ENCODE measurements at regions of chr19 and their contacts with region 1.

Region 1: GRCh38 chr19:39970675-39971379 is at the start of gene PSMC4:
- DNase-seq: peak; percentile 99
- H3K4me3 ChIP-seq: peak within 1 kb of the TSS; percentile 86
- H3K27ac ChIP-seq: peak within 1 kb of the TSS; percentile 60
- H3K4me1 ChIP-seq: peaks cover 23% of the 10 kb centered on the region
- CTCF ChIP-seq: peak; percentile 93
- total RNA-seq, gene PSMC4: 82.3 and 94.3 TPM in 2 replicates

Region 2: GRCh38 chr19:39759457-39760184 is 211.2 kb before region 1 on chr19:
- CTCF ChIA-PET with region 1: no interaction called
- POLR2A ChIA-PET with region 1: no interaction called
- intact Hi-C with region 1: no loop called
- DNase-seq: no peak
- H3K4me3 ChIP-seq: no peak overlapping the region
- H3K27ac ChIP-seq: no peak overlapping the region
- H3K4me1 ChIP-seq: peaks cover 13% of the 10 kb centered on the region
- CTCF ChIP-seq: no peak

Region 3: GRCh38 chr19:39792999-39793546 is 177.8 kb before region 1 on chr19:
- CTCF ChIA-PET with region 1: no interaction called
- POLR2A ChIA-PET with region 1: interaction called, 3 read pairs
- intact Hi-C with region 1: loop called (anchors 2 kb)
- DNase-seq: peak; percentile 85
- H3K4me3 ChIP-seq: peak overlapping the region; percentile 66
- H3K27ac ChIP-seq: no peak overlapping the region
- H3K4me1 ChIP-seq: peaks cover 4% of the 10 kb centered on the region
- CTCF ChIP-seq: peak; percentile 98

Region 4: DNA sequence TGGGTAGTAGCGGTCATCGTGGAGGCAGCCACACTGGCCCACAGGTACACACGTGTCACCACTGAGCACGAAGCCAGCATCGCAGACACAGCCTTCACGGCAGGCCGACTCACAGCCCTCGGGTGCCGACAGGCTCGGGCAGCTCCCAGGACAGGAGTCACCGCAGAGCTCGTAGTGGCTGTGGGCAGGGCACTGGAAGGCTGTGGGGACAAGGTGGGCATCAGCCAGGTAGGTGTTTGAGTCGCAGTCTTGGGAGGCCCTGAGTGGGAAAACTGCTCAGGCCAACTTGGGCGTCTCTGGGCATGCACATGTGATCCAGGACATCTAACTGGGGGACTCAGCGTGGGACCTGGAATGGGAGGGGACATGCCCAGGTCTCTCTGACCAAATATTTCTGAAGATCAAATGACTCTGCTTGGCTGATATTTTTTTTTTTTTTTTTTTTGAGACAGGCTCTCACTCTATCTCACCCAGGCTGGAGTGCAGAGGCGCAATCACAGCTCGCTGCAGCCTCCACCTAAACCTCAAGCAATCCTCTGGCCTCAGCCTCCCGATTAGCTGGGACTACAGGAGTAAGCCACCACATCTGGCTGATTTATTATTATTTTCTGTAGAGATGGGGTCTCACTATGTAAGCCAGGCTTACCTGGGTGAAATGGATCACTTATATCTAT is 80.8 kb before region 1 on chr19:
- CTCF ChIA-PET with region 1: no interaction called
- POLR2A ChIA-PET with region 1: no interaction called
- intact Hi-C with region 1: loop called (anchors 5 kb)
- DNase-seq: no peak
- H3K4me3 ChIP-seq: no peak overlapping the region
- H3K27ac ChIP-seq: no peak overlapping the region
- H3K4me1 ChIP-seq: no peaks in the 10 kb centered on the region
- CTCF ChIP-seq: no peak

Region 5: DNA sequence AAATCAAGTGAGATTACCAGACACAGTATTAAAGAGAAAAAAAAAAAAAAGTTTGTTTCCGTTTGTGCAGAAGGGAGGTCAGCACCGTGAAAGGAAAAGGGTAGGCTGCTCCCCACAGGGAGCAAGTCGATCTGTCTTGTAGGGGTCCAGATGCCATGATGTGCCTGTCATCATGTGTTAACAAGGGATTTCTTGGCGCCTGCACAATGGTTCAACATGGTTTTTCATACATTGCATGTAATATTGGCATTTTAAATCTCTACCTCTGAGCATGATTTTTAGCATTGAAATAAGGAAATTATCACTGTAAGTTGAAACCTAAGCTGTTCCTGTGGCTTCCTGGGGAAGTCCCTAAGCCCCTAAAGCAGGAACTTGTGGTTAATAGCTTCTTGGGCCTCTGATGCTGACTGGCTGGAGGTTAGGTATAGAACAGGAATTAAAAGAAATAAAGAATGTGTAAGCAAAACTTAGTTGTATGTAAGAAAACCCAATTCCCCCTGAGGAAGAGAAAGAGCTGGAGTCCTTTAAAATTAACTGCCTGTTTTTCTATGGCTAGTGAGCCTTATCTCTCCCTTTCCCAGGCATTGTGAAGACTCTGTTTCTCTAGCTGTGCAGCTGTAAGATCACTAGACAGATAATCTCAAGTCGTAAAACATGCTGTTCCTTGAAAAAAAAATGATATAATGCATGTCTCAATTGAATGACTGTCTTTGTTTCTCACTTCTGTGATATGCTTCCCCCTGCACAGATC is 29.0 kb before region 1 on chr19:
- CTCF ChIA-PET with region 1: interaction called, 4 read pairs
- POLR2A ChIA-PET with region 1: interaction called, 5 read pairs
- intact Hi-C with region 1: loop called (anchors 1 kb)
- DNase-seq: peak; percentile 81
- H3K4me3 ChIP-seq: peak overlapping the region; percentile 60
- H3K27ac ChIP-seq: peak overlapping the region; percentile 92
- H3K4me1 ChIP-seq: peaks cover 48% of the 10 kb centered on the region
- CTCF ChIP-seq: no peak

Region 6: DNA sequence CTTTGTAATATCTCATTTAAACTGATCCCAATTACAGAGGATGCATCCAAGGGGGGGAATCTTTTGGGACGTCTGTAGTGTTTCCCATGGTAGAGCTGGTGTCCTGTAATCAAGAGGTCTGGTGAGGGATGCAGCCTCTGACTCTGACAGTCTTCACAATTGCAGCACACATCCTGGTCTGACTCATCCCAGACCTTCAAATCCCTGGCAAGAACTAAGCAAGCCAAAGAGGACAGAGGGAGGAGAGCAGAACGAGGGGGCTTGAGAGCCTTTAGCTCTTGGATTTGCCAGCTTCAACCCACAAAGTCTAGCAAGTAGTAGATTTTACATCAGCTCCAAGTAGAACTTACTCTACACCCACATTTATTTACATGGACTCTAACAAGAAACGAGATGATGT is 19.1 kb before region 1 on chr19:
- CTCF ChIA-PET with region 1: interaction called, 8 read pairs
- POLR2A ChIA-PET with region 1: interaction called, 12 read pairs
- intact Hi-C with region 1: no loop called
- DNase-seq: no peak
- H3K4me3 ChIP-seq: no peak overlapping the region
- H3K27ac ChIP-seq: peak overlapping the region; percentile 96
- H3K4me1 ChIP-seq: peaks cover 63% of the 10 kb centered on the region
- CTCF ChIP-seq: no peak

Region 7: GRCh38 chr19:39996811-39997594 is 26.2 kb after region 1 on chr19 and contains the start of gene ZNF546:
- CTCF ChIA-PET with region 1: interaction called, 3 read pairs
- POLR2A ChIA-PET with region 1: interaction called, 8 read pairs
- intact Hi-C with region 1: loop called (anchors 1 kb)
- DNase-seq: peak; percentile 93
- H3K4me3 ChIP-seq: peak within 1 kb of the TSS; percentile 77
- H3K27ac ChIP-seq: peak within 1 kb of the TSS; percentile 42
- H3K4me1 ChIP-seq: peaks cover 16% of the 10 kb centered on the region
- CTCF ChIP-seq: 0 out of 2 replicates have a peak, but pooled peaks have one; percentile 23
- total RNA-seq, gene ZNF546: 2.3 and 5.0 TPM in 2 replicates